WTC11 (cell line): ENCODE measurements at regions of chr14 and their contacts with region 1.

Region 1: GRCh38 chr14:22131749-22132476 is 457.1 kb downstream of the DAD1 start:
- DNase-seq: peak; percentile 59
- ATAC-seq: no peak
- H3K4me3 Mint-ChIP-seq: no peak overlapping the region
- H3K27ac Mint-ChIP-seq: no peak overlapping the region
- H3K4me1 Mint-ChIP-seq: no peaks in the 10 kb centered on the region
- H3K27me3 Mint-ChIP-seq: peaks cover 2% of the 10 kb centered on the region
- CTCF ChIP-seq: peak; percentile 66

Region 2: DNA sequence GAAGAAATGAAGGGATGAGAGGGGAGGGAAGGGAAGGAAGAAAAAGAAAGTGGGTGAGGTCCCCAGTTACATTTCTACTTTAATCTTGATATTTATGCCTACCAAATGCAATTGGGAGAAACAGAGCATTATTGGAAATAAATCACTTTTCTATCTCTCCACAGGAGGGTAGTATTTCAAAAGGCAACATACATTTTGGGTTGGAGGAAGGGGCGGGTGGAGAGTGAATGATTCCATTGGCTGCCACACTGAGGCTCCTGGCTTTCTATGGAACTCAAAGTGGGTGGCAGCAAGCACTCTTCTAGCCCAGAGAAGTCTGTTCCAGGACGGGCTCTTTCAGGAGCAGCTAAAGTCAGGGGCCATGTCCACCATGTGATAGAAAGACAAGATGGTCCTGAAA is 15.8 kb after region 1 on chr14:
- CTCF ChIA-PET with region 1: interaction called, 12 read pairs
- POLR2A ChIA-PET with region 1: no interaction called
- DNase-seq: no peak
- ATAC-seq: peak; percentile 41; the same call in 1 of the 2 replicates
- H3K4me3 Mint-ChIP-seq: no peak overlapping the region
- H3K27ac Mint-ChIP-seq: no peak overlapping the region
- H3K4me1 Mint-ChIP-seq: peaks cover 2% of the 10 kb centered on the region
- H3K27me3 Mint-ChIP-seq: peaks cover 3% of the 10 kb centered on the region; the same call in 1 of the 2 replicates
- CTCF ChIP-seq: no peak